Naive thymus-derived CD8-positive, alpha-beta T cell (primary cell): ENCODE measurements at regions of chr6 and their contacts with region 1.

Region 1: GRCh38 chr6:145814501-145815308 is at the start of gene FBXO30:
- DNase-seq: peak; percentile 80 to 91 (median 88)
- ATAC-seq: peak; percentile 82 to 88
- H3K4me3 Mint-ChIP-seq: peak within 1 kb of the TSS; percentile 90 to 98 (median 94)
- H3K27ac Mint-ChIP-seq: peak within 1 kb of the TSS; percentile 92 to 98 (median 96)
- H3K4me1 Mint-ChIP-seq: peaks cover 15 to 57% (median 38%) of the 10 kb centered on the region in 4 donors
- H3K27me3 Mint-ChIP-seq: no peaks in the 10 kb centered on the region
- polyA plus RNA-seq, gene FBXO30: 0.23 to 0.90 (median 0.81) TPM

Region 2: DNA sequence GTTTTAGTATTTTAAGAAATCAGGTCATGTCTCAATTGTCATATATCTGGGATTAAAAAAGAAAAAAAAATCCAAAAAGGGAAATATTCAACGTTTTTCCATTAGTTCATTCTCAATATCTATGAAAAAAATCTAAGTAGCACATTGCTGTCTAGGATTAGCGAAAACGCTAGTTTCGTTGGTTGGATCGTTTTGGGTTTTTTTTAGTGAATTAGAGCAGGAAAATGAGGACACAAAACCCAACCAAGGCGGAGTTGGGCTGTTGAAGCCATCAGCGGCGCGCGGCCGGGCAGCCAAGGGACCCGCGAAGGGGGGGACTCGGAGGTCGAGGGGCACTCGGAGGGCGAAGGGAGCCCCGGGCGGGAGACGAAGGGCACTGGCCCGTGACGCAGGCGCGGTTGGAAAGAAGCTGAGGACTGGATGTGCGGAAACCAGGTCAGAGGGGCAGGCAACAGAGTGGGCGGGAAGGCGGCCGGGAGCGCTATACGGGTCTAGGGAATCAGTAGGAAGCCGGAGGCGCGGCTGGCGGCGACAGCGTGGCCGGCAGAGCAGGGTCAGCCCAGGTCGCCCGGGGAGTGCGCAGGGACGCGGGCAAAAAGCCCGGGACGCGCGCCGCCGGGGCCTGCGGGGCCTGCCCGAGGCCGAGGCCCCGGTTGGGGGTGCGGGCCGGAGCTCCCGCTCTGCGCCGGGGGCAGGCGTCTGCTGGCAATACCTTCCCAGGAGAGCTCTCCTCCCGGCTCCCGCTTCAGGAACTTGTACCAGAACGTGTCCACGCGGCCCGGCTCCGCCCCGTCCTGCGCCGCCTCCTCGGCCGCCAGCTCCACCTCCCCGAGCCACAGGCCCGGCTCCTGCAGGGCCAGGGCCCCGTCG is 80.0 kb before region 1 on chr6:
- POLR2A ChIA-PET with region 1: interaction called, 54 read pairs
- DNase-seq: peak; percentile 52 to 86 (median 68)
- ATAC-seq: peak; percentile 59 to 69
- H3K4me3 Mint-ChIP-seq: peak overlapping the region; percentile 93 to 100 (median 98)
- H3K27ac Mint-ChIP-seq: peak overlapping the region; percentile 94 to 99 (median 98)
- H3K4me1 Mint-ChIP-seq: peaks cover 4 to 45% (median 23%) of the 10 kb centered on the region in 4 donors
- H3K27me3 Mint-ChIP-seq: no peaks in the 10 kb centered on the region

Region 3: GRCh38 chr6:145749632-145750031 is 65.1 kb before region 1 on chr6:
- POLR2A ChIA-PET with region 1: no interaction called
- DNase-seq: no peak
- ATAC-seq: no peak
- H3K4me3 Mint-ChIP-seq: no peak overlapping the region
- H3K27ac Mint-ChIP-seq: no peak overlapping the region
- H3K4me1 Mint-ChIP-seq: peaks cover 0 to 7% (median 2%) of the 10 kb centered on the region in 4 donors
- H3K27me3 Mint-ChIP-seq: peaks cover 0 to 4% (median 0%) of the 10 kb centered on the region in 5 donors

Region 4: DNA sequence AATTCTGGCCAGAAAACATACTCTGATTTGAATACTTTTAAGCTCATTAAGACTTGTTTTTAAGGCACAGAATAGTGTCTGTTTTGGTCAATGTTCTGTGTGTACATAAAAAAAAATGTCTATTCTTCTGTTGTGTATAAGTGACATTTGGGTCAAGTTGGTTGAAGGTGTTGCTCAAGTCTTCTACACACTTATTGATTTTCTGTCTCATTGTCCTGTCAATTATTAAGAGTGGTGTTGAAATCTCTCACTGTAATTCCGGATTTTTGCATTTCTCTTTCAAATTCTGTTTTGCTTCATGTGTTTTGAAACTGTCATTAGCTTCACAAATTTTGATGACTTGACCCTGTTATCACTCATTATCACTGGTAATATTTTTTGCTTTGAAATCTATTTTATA is 41.9 kb before region 1 on chr6:
- POLR2A ChIA-PET with region 1: no interaction called
- DNase-seq: no peak
- ATAC-seq: no peak
- H3K4me3 Mint-ChIP-seq: no peak overlapping the region
- H3K27ac Mint-ChIP-seq: no peak overlapping the region
- H3K4me1 Mint-ChIP-seq: no peaks in the 10 kb centered on the region
- H3K27me3 Mint-ChIP-seq: peaks cover 0 to 4% (median 0%) of the 10 kb centered on the region in 5 donors

Region 5: DNA sequence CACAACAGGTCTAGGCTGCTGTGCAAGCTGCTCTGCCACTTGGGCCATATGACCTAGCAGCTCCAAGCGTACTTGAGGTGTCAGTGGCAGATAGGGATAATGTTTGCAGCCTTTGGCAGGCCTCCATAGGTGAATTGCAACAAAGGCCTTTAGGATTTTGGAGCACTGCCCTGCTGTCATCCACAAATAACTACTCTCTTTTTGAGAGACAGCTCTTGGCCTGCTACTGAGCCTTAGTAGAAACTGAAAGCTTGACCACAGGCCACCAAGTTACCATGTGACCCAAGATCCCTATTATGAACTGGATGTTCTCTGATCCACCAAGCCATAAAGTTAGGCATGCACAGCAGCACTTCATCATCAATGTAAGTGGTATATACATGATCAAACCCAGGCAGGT is 30.0 kb before region 1 on chr6:
- POLR2A ChIA-PET with region 1: no interaction called
- DNase-seq: no peak
- ATAC-seq: no peak
- H3K4me3 Mint-ChIP-seq: no peak overlapping the region
- H3K27ac Mint-ChIP-seq: no peak overlapping the region
- H3K4me1 Mint-ChIP-seq: no peaks in the 10 kb centered on the region
- H3K27me3 Mint-ChIP-seq: no peaks in the 10 kb centered on the region

Region 6: GRCh38 chr6:145829102-145829501 is 14.4 kb after region 1 on chr6:
- POLR2A ChIA-PET with region 1: no interaction called
- DNase-seq: no peak
- ATAC-seq: no peak
- H3K4me3 Mint-ChIP-seq: no peak overlapping the region
- H3K27ac Mint-ChIP-seq: no peak overlapping the region
- H3K4me1 Mint-ChIP-seq: no peaks in the 10 kb centered on the region
- H3K27me3 Mint-ChIP-seq: no peaks in the 10 kb centered on the region

Region 7: GRCh38 chr6:145963216-145964068 is 148.7 kb after region 1 on chr6:
- POLR2A ChIA-PET with region 1: interaction called, 35 read pairs
- DNase-seq: peak; percentile 10 to 63 (median 38)
- ATAC-seq: peak; percentile 27 to 33
- H3K4me3 Mint-ChIP-seq: peak overlapping the region; percentile 95 to 100 (median 98)
- H3K27ac Mint-ChIP-seq: peak overlapping the region; percentile 89 to 100 (median 99)
- H3K4me1 Mint-ChIP-seq: peaks cover 25 to 67% (median 58%) of the 10 kb centered on the region in 4 donors
- H3K27me3 Mint-ChIP-seq: no peaks in the 10 kb centered on the region